ENCODE measurements at regions of chr1 and their contacts with region 1.

Region 1: GRCh38 chr1:7218210-7218832 is 433.1 kb downstream of the CAMTA1 start:
- DNase-seq: peak; percentile 42
- H3K4me3 Mint-ChIP-seq: no peak overlapping the region
- H3K27ac Mint-ChIP-seq: no peak overlapping the region
- H3K4me1 Mint-ChIP-seq: no peaks in the 10 kb centered on the region
- H3K27me3 Mint-ChIP-seq: peaks cover 28% of the 10 kb centered on the region
- CTCF ChIP-seq: peak; percentile 81

Region 2: GRCh38 chr1:6489799-6490180 is 728.5 kb before region 1 on chr1:
- CTCF ChIA-PET with region 1: no interaction called
- intact Hi-C with region 1: loop called (anchors 5 kb)
- DNase-seq: peak; percentile 76
- H3K4me3 Mint-ChIP-seq: peak overlapping the region; percentile 72
- H3K27ac Mint-ChIP-seq: no peak overlapping the region
- H3K4me1 Mint-ChIP-seq: peaks cover 10% of the 10 kb centered on the region
- H3K27me3 Mint-ChIP-seq: peaks cover 51% of the 10 kb centered on the region
- CTCF ChIP-seq: peak; percentile 91

Region 3: DNA sequence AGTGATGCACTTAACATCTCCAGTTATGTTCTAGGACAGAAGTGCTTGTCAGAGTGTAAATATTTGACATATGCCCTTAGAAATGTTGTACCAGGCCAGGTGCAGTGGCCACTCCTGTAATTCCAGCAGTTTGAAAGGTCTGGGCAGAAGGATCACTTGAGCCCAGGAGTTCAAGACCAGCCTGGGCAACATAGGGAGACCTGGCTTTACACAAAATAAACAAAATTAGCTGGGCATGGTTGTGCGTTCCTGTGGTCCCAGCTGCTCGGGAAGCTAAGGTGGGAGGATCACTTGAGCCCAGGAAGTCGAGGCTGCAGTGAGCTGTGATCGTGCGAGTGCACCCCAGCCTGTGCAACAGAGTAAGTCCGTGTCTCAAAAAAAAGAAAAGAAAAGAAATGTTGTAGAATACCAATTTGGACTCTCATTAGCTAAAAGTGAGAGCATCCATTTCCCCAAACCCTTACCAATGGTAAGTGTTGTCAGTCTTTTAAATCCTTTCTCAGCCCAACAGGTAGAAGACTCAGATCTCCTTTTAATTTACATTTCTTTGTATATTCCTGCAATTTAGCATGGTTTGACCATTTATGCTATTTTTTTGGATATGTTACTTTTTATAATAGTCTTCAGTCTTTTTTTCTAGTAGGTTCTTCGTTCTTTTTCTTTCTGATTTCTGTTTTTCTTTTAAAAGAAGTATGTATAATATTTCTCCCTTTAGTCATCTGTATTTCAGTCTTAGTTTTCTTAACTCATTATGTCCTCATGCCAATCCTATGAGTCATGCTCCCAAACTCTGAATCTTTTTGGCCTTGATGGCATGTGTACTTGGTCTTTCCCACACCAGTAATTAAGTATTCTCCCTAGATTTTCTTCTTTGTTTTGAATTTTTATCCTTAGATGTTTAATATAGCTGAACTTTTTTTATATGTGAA is 358.6 kb before region 1 on chr1:
- CTCF ChIA-PET with region 1: no interaction called
- intact Hi-C with region 1: no loop called
- DNase-seq: peak; percentile 32
- H3K4me3 Mint-ChIP-seq: peak overlapping the region; percentile 0
- H3K27ac Mint-ChIP-seq: peak overlapping the region; percentile 28
- H3K4me1 Mint-ChIP-seq: peaks cover 54% of the 10 kb centered on the region
- H3K27me3 Mint-ChIP-seq: no peaks in the 10 kb centered on the region
- CTCF ChIP-seq: no peak

Region 4: DNA sequence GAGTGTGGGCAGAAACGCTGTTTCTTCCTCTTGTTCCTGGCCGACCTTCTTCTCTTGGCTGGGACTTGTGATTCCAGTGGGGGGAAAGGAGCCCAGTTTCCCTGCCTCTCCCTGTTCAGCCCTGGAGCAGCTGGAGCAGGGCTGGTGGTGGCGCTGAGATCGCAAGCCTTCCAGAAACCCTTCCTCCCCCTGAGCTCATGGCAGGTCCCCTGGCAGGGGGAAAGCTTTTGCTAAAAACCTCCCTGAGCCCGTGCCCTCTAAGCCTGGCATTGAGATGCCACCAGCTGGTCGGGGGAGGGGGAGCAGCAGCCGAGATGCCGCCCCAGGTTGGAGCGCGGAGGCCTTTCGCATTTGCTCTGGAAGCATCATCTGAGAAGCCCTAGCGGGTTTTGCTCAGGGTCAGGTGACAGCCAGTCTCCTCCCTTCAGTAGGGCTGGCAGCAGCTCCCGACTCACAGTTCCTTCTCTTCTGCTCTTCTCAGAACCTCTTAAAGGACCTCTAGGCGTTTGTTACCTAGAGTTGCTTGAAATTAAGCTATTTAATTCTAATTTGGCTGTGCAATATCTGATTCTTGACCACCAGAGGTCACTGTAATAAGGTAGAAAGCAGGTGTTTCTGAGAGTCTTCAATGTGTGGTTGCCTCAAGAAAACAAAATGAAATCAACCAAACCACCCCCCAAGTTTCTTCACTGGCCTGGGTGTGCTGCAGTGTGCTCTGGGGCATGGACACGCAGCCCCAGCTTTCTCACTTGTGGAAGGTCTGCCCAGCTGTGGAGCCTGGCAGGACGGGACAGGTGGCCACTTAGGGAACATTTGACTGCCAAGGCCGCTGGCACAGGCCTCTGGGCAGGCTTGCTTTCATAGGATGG is 175.8 kb before region 1 on chr1:
- CTCF ChIA-PET with region 1: interaction called, 6 read pairs
- intact Hi-C with region 1: loop called (anchors 2 kb)
- DNase-seq: no peak
- H3K4me3 Mint-ChIP-seq: no peak overlapping the region
- H3K27ac Mint-ChIP-seq: no peak overlapping the region
- H3K4me1 Mint-ChIP-seq: no peaks in the 10 kb centered on the region
- H3K27me3 Mint-ChIP-seq: peaks cover 46% of the 10 kb centered on the region
- CTCF ChIP-seq: no peak

Region 5: DNA sequence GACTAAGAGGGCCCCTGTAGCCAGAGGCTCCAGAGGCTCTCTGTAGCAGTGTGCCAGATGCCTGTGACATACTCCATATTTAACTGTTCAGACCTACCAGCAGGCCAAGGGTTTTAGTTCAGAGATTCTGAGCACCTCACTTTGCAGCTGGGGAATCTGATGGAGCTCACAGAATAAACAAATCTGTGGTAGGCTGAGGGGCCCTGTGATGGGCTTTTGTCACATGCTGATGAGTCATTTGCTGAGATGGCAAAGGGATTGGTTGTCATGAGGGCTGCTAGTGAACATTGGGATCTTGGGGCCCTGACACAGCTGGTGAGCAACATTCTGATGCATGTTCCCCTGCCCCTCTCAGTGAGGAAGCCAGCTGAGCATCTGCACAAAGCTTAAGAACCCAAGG is 49.2 kb after region 1 on chr1:
- CTCF ChIA-PET with region 1: no interaction called
- intact Hi-C with region 1: no loop called
- DNase-seq: no peak
- H3K4me3 Mint-ChIP-seq: no peak overlapping the region
- H3K27ac Mint-ChIP-seq: peak overlapping the region; percentile 78
- H3K4me1 Mint-ChIP-seq: peaks cover 30% of the 10 kb centered on the region
- H3K27me3 Mint-ChIP-seq: no peaks in the 10 kb centered on the region
- CTCF ChIP-seq: no peak

Region 6: GRCh38 chr1:7576946-7577641 is 358.8 kb after region 1 on chr1:
- CTCF ChIA-PET with region 1: no interaction called
- intact Hi-C with region 1: no loop called
- DNase-seq: peak; percentile 21
- H3K4me3 Mint-ChIP-seq: no peak overlapping the region
- H3K27ac Mint-ChIP-seq: no peak overlapping the region
- H3K4me1 Mint-ChIP-seq: no peaks in the 10 kb centered on the region
- H3K27me3 Mint-ChIP-seq: peaks cover 9% of the 10 kb centered on the region
- CTCF ChIP-seq: no peak